ENCODE measurements at regions of chr14 and their contacts with region 1.

Region 1: DNA sequence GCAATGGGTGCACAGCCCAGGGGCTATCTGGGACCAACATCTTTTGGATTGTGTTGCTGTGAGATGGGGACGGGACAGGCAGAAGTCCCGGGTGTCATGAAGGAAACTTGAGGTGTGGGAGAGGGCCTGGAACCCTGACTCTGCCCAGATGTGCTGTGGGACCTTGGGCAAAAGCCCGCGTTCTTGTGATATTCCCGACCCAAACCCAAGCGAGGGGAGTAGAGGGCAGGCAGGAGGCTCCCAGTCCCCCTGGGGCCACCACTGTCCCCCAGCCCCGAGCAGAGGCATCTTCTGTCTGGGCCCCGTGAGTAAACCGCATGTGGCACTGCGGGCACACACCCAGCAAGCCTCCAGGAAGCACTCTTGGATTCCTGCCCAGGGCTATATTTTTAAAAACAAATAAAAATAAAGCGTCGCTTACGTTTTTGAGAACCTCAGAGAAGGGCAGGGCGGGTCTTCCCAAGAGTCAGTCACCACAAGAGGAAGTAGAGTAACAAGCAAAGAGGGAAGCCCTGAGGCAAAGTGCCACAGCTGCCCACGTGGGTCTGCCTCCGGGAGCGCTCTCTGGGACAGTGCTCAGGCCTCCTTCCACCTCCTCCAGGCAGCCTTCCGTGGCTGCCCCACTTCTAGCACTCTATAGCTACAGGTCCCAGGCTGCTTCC is 39.5 kb downstream of the BEGAIN start:
- DNase-seq: peak; percentile 64
- H3K4me3 Mint-ChIP-seq: peak overlapping the region; percentile 84
- H3K27ac Mint-ChIP-seq: no peak overlapping the region
- H3K4me1 Mint-ChIP-seq: peaks cover 26% of the 10 kb centered on the region
- H3K27me3 Mint-ChIP-seq: no peaks in the 10 kb centered on the region

Region 2: GRCh38 chr14:100586403-100587085 is 38.8 kb after region 1 on chr14:
- CTCF ChIA-PET with region 1: no interaction called
- intact Hi-C with region 1: loop called (anchors 5 kb)
- DNase-seq: peak; percentile 64
- H3K4me3 Mint-ChIP-seq: peak overlapping the region; percentile 76
- H3K27ac Mint-ChIP-seq: peak overlapping the region; percentile 42
- H3K4me1 Mint-ChIP-seq: no peaks in the 10 kb centered on the region
- H3K27me3 Mint-ChIP-seq: peaks cover 16% of the 10 kb centered on the region